ENCODE measurements at regions of chr13 and their contacts with region 1.

Region 1: DNA sequence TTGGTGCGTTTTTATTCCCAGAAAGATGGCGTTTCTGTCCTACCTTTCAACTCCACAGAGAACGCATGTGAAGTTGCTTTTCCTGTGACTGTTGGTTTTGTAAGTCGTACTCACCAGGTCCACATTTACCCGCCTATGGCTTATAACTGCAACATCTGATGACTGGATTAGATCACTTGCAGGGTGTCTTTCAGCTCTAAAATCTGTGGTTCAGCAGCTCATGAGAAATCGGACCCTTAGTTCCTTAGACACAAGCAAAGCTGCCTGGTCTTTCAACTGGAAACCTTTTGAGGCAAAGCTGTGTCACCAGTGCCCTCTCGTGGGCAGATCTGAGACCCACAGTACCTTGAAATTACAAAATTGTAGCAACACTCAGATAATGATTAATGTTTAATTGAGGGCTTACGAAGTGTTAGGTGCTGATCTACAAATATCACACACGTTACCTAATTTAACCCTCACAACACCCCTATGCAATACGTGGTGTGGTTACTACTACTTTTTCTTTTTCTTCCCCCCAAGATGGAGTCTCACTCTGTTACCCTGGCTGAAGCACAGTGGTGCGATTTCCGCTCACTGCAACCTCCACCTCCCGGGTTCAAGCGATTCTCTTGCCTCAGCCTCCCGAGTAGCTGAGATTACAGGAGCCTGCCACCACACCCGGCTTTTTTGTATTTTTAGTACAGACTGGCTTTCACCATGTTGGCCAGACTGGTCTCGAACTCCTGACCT is 65.4 kb downstream of the RUBCNL start:
- DNase-seq: peak; percentile 89
- H3K4me3 ChIP-seq: no peak overlapping the region
- H3K27ac ChIP-seq: peak overlapping the region; percentile 60
- H3K4me1 ChIP-seq: peaks cover 12% of the 10 kb centered on the region
- H3K27me3 ChIP-seq: no peaks in the 10 kb centered on the region
- CTCF ChIP-seq: peak; percentile 93

Region 2: GRCh38 chr13:45370922-45371406 is 950.7 kb before region 1 on chr13:
- CTCF ChIA-PET with region 1: no interaction called
- POLR2A ChIA-PET with region 1: no interaction called
- intact Hi-C with region 1: loop called (anchors 5 kb)
- DNase-seq: peak; percentile 82
- H3K4me3 ChIP-seq: no peak overlapping the region
- H3K27ac ChIP-seq: no peak overlapping the region
- H3K4me1 ChIP-seq: peaks cover 7% of the 10 kb centered on the region
- H3K27me3 ChIP-seq: no peaks in the 10 kb centered on the region
- CTCF ChIP-seq: peak; percentile 94

Region 3: DNA sequence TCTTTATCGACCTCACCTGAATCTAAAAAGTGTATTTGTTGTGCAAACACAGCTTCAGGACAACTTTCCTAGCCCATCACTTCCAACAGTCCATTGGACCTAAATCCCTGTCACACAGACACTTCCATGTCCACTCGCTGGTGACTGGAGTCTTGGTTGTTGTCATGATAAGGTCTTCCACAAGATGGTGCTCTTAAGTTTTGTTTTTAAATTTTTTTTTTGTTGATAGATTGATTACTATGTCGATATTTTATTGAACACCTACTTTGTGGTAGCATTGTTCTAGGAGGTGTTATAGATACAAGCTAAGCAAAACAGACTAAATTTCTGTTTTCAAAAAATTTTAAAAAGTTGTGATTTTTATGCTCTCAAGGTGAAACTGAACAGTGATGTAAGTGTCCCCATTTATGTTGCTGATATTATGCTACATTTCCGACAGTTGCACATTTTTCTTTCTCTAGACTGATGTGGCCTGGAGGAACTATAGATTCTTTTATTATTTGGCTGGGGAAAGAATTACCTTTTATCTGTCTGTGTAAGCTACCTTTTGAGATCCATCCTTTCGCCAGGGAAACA is 698.1 kb before region 1 on chr13:
- CTCF ChIA-PET with region 1: no interaction called
- POLR2A ChIA-PET with region 1: no interaction called
- intact Hi-C with region 1: loop called (anchors 10 kb)
- DNase-seq: peak; percentile 57
- H3K4me3 ChIP-seq: no peak overlapping the region
- H3K27ac ChIP-seq: no peak overlapping the region
- H3K4me1 ChIP-seq: peaks cover 16% of the 10 kb centered on the region
- H3K27me3 ChIP-seq: no peaks in the 10 kb centered on the region
- CTCF ChIP-seq: peak; percentile 77

Region 4: GRCh38 chr13:46146899-46147298 is 174.8 kb before region 1 on chr13:
- CTCF ChIA-PET with region 1: interaction called, 7 read pairs
- POLR2A ChIA-PET with region 1: no interaction called
- intact Hi-C with region 1: loop called (anchors 2 kb)
- DNase-seq: peak; percentile 67
- H3K4me3 ChIP-seq: no peak overlapping the region
- H3K27ac ChIP-seq: no peak overlapping the region
- H3K4me1 ChIP-seq: peaks cover 53% of the 10 kb centered on the region
- H3K27me3 ChIP-seq: no peaks in the 10 kb centered on the region
- CTCF ChIP-seq: peak; percentile 70